Posterior vena cava (tissue), 2 donors: ENCODE measurements at regions of chr2 and their contacts with region 1.

Region 1: DNA sequence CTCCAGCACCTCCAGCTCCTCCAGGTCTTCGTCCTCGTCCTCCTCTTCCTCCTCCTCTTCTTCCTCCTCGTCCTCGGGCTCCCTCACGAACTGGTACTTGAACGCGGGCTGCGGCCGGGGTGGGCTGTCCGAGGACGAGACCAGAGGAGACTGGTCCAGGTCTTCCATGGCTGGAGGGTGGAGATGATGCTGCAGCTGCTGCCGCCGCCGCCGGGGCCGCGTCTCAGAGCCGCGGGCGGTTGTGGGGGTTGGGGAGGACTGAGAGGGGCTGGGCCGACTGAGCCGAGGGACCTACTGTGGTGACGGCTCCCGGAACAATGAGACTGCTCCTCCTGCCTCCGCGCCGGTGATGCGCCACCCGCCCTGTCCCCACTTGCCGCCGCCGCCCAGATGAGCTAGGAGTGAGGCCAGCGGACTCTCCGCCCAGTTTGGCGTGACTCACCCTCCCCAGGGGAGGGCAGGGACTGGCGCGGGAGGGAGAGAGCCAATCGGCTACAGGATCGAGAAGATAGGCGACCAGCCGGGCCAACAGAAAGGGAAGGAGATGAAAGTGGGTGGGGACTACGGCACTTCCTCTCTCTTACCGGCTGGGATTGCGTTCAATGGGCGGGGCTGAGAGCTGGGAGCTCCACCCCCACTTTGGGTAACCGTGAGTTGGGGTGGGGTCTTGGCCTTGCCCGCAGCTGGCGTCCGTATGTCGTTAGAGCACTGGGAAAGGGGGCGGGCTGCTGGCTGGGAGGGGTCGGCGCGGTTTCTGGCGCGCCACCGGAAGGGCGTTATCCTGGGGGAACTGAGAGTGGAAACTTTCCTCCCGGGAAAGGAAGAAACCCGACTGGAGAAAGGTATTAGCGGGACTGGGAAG is at the start of gene RTN4:
- DNase-seq: peak; percentile 99
- total RNA-seq, gene RTN4: 324 to 410 TPM

Region 2: GRCh38 chr2:54899576-54900200 is 150.7 kb before region 1 on chr2:
- intact Hi-C with region 1: loop called in 1 of 2 experiments (anchors 10 kb)
- DNase-seq: no peak

Region 3: DNA sequence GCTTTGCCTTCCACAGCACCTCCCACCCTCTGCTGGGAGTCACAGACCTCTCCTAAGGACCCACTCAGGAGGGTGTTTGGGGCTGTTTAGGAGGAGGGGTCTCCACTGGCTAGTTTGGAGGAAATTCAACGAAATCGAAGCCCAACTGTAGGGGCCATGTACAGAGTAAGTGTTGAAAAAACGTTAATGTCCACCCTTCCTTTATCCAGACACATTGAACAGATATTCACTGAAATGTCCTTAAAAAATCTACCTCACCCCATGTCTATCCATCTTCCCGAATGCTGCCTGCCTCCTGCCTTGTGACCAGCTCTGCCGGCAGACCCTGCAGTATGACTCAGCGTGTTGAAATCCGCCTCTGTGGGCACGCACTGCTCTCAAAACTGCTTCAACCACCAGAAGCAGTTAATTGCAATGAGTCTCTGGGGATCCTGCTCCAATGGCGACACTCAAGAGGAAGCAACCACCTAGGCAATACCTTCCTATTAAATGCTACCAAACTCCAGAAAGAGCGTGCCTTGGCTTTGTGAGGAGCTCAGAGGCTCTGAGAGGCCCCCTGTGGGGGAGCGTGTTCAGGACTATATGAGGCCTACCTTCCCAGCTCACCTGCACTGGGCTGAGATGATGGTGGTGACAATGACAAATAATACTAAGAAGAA is 61.3 kb after region 1 on chr2:
- intact Hi-C with region 1: loop called in 1 of 2 experiments (anchors 10 kb)
- DNase-seq: peak; percentile 94

Region 4: DNA sequence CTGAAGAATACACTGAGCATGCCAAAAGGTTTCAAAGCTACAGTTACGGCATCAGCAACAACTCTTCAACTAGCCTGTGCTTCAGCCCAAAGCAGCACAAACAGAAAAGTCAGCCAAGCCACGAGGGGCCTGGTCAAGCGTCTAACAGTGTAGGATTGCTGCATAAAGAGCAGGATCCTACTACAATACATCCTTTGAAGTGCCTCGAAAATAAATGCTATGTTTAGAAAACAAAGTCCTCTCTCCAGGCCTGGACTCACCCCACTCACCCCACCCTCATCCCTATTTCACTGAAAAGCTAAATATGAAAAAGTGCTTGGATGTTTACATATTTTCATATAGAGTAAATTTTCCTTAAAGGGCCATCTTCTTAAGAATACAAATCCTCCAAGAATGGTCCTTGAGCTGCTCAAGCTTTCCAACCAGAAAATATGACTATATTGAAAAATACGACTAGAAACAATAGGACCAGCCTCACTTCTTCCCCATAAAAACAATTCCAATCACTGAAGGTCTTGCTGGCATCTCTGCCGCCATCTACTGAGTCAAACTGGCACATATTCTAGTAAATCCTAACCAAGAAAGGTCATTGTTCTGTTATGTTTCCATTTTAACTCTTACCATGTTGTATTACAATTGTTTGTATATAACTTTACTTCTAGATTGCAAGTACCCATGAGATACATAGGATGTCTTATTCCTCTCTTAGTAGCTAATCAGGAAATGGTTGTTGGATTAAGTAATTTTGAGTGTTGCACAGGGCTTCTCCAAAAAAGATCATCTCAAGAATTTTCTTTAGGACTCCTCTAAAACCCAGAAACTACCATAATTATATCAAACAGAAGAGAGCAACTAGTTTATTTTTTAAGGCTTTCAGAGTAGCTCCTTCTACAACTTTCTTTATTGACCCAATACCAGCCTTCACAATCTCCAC is 118.1 kb after region 1 on chr2:
- intact Hi-C with region 1: loop called (anchors 2 to 5 kb)
- DNase-seq: peak; percentile 81

Region 5: GRCh38 chr2:55173438-55174054 is 123.2 kb after region 1 on chr2:
- intact Hi-C with region 1: loop called (anchors 2 to 5 kb)
- DNase-seq: no peak